ENCODE measurements at regions of chr7 and their contacts with region 1.

Region 1: DNA sequence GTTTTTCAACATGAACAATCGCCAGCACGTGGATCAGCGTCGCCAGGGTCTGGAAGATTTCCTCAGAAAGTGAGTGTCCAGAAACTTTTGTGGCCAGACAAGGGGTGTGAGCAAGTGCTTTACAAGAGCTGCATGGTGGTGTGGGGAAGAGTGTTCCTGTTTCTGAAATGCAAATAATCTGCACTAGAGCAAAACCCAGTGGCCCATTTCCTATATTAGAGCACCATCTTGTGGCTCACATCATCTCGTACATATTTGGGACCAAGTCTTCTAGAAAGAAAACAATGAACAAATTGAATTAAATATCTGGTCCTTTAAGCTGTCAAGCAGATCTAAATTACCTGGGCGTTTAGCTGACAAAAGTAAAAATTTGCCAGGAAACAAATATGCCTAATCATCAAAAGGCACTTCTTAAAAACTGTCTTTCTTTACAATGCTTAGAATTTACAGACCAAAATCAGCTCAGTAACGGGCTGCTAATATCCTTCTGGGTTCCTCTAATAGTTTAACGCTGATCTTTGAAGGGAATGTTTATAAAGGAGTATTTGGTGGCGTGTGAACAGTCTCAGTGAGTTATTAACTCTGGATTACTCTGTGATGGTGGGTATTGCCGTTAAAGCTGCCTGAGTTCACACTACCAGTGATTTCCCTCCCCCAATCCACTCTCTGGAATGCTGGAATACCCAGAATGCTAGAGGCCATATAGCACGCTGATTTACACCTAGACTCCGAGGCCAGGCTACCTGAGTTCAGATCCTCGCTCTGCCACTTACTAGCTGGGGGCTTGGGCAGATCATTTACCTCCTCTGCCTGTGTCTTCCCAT is 73.6 kb downstream of the SNX10 start:
- DNase-seq: peak; percentile 71
- H3K4me3 Mint-ChIP-seq: no peak overlapping the region
- H3K27ac Mint-ChIP-seq: no peak overlapping the region
- H3K4me1 Mint-ChIP-seq: peaks cover 9% of the 10 kb centered on the region
- H3K27me3 Mint-ChIP-seq: no peaks in the 10 kb centered on the region

Region 2: GRCh38 chr7:25951031-25951948 is 414.0 kb before region 1 on chr7:
- CTCF ChIA-PET with region 1: no interaction called
- intact Hi-C with region 1: loop called (anchors 5 kb)
- DNase-seq: peak; percentile 91
- H3K4me3 Mint-ChIP-seq: peak overlapping the region; percentile 88
- H3K27ac Mint-ChIP-seq: no peak overlapping the region
- H3K4me1 Mint-ChIP-seq: peaks cover 16% of the 10 kb centered on the region
- H3K27me3 Mint-ChIP-seq: peaks cover 7% of the 10 kb centered on the region

Region 3: DNA sequence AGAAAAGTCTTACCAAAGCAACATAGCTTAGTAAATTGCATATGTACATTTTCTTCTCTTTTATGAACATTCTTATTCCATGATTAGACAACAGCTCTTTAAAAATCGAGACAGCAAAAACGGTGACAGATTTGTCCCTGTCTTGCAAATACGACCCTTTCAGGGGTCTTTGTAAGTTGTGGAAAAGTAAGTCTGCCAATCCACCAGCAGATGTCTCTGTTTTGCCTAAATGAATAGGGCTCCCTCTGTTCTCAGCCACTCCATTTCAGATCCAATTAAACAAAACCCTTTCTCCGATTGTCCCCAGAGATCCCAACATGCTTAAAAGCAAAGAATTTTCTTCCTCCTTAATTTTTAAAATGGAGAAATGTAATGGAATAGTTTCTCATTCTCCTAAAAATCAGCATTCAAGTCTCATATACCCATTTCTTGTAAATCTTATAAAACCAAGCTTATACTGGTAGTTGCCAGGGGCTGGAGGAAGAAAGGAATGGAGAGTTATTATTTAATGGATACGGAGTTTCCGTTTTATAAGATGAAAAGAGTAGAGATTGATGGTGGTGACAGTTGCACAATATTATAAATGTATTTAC is 274.3 kb before region 1 on chr7:
- CTCF ChIA-PET with region 1: interaction called, 68 read pairs
- intact Hi-C with region 1: loop called (anchors 1 kb)
- DNase-seq: peak; percentile 15
- H3K4me3 Mint-ChIP-seq: no peak overlapping the region
- H3K27ac Mint-ChIP-seq: no peak overlapping the region
- H3K4me1 Mint-ChIP-seq: peaks cover 19% of the 10 kb centered on the region
- H3K27me3 Mint-ChIP-seq: no peaks in the 10 kb centered on the region

Region 4: GRCh38 chr7:26376175-26376917 is 11.1 kb after region 1 on chr7:
- CTCF ChIA-PET with region 1: interaction called, 17 read pairs
- intact Hi-C with region 1: no loop called
- DNase-seq: peak; percentile 60
- H3K4me3 Mint-ChIP-seq: peak overlapping the region; percentile 78
- H3K27ac Mint-ChIP-seq: no peak overlapping the region
- H3K4me1 Mint-ChIP-seq: no peaks in the 10 kb centered on the region
- H3K27me3 Mint-ChIP-seq: peaks cover 36% of the 10 kb centered on the region

Region 5: GRCh38 chr7:26398756-26399501 is 33.6 kb after region 1 on chr7:
- CTCF ChIA-PET with region 1: interaction called, 17 read pairs
- intact Hi-C with region 1: no loop called
- DNase-seq: peak; percentile 56
- H3K4me3 Mint-ChIP-seq: peak overlapping the region; percentile 92
- H3K27ac Mint-ChIP-seq: no peak overlapping the region
- H3K4me1 Mint-ChIP-seq: peaks cover 5% of the 10 kb centered on the region
- H3K27me3 Mint-ChIP-seq: peaks cover 40% of the 10 kb centered on the region

Region 6: DNA sequence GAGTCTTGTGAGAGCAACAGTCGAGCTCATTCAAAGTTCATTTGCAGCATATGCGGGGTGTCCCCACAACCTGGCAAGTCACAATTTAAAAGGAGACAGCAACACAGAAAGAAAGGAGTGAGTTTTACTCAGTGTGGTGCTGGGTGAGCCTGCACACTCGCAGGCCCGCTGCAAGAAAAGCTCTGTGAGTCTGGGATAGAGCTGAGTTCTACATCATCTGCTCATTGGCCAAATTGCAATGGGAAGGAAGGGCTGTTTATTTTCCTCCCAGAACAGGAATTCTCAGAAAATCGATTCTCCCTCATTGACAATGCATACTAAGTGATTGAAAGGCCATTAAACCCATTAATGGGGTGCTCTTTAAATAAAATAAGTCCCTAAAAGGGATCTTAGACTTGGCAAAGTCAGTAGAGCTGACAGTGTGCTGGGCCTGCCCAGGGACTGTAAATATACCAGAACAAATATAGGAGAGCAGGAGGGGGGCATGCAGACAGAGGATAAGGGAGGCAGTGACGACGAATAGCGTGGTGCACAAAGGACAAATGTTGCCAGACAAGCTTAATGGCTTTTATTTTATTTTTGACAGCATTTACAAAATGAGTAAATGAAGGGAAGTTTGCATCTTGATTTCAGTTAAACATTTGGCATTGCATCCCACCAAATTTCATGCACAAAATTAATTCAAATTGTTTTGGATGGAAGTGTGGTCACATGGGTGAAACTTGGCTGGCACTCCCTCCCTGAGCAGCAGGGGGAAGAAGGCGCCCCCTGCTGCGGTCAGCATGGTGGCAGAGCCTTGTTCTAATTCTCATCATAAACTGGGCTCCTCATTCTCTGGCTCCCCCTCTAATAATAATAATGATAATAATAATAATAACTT is 142.1 kb after region 1 on chr7:
- CTCF ChIA-PET with region 1: interaction called, 11 read pairs
- intact Hi-C with region 1: no loop called
- DNase-seq: no peak
- H3K4me3 Mint-ChIP-seq: no peak overlapping the region
- H3K27ac Mint-ChIP-seq: no peak overlapping the region
- H3K4me1 Mint-ChIP-seq: no peaks in the 10 kb centered on the region
- H3K27me3 Mint-ChIP-seq: peaks cover 8% of the 10 kb centered on the region

Region 7: GRCh38 chr7:27160546-27161213 is 795.4 kb after region 1 on chr7:
- CTCF ChIA-PET with region 1: interaction called, 4 read pairs
- intact Hi-C with region 1: loop called (anchors 1 kb)
- DNase-seq: peak; percentile 87
- H3K4me3 Mint-ChIP-seq: peak overlapping the region; percentile 57
- H3K27ac Mint-ChIP-seq: no peak overlapping the region
- H3K4me1 Mint-ChIP-seq: peaks cover 35% of the 10 kb centered on the region
- H3K27me3 Mint-ChIP-seq: peaks cover 77% of the 10 kb centered on the region